ENCODE measurements at regions of chr12 and their contacts with region 1.

Region 1: DNA sequence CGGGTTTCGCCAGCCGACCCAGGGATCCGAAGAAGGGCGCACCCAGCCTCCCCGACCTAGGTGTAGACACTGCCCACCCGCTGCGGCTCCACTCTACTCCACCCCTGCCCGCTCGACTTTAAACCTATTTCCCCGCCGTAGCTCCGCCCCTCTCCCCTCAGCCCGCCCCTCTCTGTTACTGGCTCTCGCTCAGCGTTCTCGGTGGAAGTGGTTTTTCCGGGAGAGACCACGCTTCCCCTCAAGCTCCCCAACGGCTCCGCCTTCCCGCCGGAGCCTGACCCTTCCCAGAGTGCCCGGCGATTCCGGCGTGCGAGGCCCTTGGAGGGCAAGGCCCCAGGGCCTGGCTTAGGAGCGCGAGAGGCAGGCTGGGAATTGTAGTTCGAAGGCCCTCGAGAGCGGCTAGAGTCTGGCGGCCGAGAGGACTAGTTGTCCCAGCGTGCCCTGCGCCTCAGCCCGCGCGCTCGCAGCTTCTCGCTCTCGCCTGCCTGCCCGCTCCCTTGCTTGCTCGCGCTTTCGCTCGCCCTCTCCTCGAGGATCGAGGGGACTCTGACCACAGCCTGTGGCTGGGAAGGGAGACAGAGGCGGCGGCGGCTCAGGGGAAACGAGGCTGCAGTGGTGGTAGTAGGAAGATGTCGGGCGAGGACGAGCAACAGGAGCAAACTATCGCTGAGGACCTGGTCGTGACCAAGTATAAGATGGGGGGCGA is at the start of gene PA2G4:
- DNase-seq: peak; percentile 92
- ATAC-seq: peak; percentile 91
- H3K4me3 Mint-ChIP-seq: peak within 1 kb of the TSS; percentile 98
- H3K27ac Mint-ChIP-seq: peak within 1 kb of the TSS; percentile 93
- H3K4me1 Mint-ChIP-seq: peaks cover 33% of the 10 kb centered on the region
- H3K27me3 Mint-ChIP-seq: no peaks in the 10 kb centered on the region
- CTCF ChIP-seq: no peak
- total RNA-seq, gene PA2G4: 137 and 155 TPM in 2 replicates

Region 2: GRCh38 chr12:55829967-55830600 is 274.2 kb before region 1 on chr12:
- CTCF ChIA-PET with region 1: no interaction called
- POLR2A ChIA-PET with region 1: interaction called, 8 read pairs
- intact Hi-C with region 1: loop called (anchors 2 kb)
- DNase-seq: peak; percentile 32
- ATAC-seq: peak; percentile 13
- H3K4me3 Mint-ChIP-seq: peak overlapping the region; percentile 97
- H3K27ac Mint-ChIP-seq: peak overlapping the region; percentile 91
- H3K4me1 Mint-ChIP-seq: peaks cover 51% of the 10 kb centered on the region
- H3K27me3 Mint-ChIP-seq: no peaks in the 10 kb centered on the region
- CTCF ChIP-seq: no peak

Region 3: DNA sequence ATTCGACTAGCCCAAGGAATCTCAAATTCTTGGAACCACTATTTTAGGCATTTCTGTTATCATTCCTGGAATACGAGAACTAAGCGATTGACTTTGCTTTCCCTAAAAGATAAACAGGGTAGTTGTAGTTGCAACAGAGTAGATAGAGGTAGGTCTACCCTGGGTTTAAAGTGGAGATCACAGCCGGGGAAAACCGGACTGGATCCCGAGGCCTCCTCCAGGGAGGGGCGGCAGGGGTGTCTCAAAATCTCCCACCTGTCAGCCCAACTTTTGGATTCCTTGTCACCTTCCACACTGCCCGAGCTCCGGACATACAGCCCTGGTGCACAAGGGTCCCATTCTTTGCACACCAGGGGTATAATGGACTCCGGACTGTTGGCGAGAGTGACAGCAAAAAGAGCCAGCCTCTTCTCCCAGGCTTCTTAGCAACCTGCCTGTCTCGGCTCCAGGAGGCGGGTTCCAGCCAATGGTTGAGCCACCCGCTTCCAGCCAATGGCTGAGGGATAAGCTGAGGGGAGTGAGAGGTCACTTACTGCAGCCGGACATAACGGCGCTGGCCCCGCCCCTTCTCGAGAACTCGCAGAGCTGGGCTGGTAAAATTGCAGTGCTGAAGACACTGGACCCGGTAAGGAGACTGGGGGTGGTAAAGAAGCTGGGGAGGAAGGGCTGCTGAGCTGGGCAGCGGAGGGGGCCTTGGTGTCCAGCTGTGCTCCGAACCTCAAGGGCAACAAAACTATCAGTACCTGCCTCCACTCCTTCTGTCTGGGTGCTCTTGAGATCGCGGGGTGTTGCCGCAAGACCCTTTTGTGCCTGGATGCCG is 107.3 kb before region 1 on chr12 and contains the start of gene SUOX:
- CTCF ChIA-PET with region 1: interaction called, 3 read pairs
- POLR2A ChIA-PET with region 1: interaction called, 12 read pairs
- intact Hi-C with region 1: loop called (anchors 1 kb)
- DNase-seq: no peak
- ATAC-seq: peak; percentile 75
- H3K4me3 Mint-ChIP-seq: peak within 1 kb of the TSS; percentile 78
- H3K27ac Mint-ChIP-seq: peak within 1 kb of the TSS; percentile 18
- H3K4me1 Mint-ChIP-seq: peaks cover 21% of the 10 kb centered on the region
- H3K27me3 Mint-ChIP-seq: no peaks in the 10 kb centered on the region
- CTCF ChIP-seq: no peak
- total RNA-seq, gene SUOX: 5.4 and 5.6 TPM in 2 replicates

Region 4: GRCh38 chr12:56041552-56042429 is 62.5 kb before region 1 on chr12 and contains the start of gene RPS26:
- CTCF ChIA-PET with region 1: no interaction called
- POLR2A ChIA-PET with region 1: interaction called, 10 read pairs
- intact Hi-C with region 1: loop called (anchors 1 kb)
- DNase-seq: peak; percentile 77
- ATAC-seq: peak; percentile 93
- H3K4me3 Mint-ChIP-seq: peak within 1 kb of the TSS; percentile 99
- H3K27ac Mint-ChIP-seq: peak within 1 kb of the TSS; percentile 98
- H3K4me1 Mint-ChIP-seq: peaks cover 33% of the 10 kb centered on the region
- H3K27me3 Mint-ChIP-seq: no peaks in the 10 kb centered on the region
- CTCF ChIP-seq: no peak
- total RNA-seq, gene RPS26: 23.9 and 28.1 TPM in 2 replicates

Region 5: DNA sequence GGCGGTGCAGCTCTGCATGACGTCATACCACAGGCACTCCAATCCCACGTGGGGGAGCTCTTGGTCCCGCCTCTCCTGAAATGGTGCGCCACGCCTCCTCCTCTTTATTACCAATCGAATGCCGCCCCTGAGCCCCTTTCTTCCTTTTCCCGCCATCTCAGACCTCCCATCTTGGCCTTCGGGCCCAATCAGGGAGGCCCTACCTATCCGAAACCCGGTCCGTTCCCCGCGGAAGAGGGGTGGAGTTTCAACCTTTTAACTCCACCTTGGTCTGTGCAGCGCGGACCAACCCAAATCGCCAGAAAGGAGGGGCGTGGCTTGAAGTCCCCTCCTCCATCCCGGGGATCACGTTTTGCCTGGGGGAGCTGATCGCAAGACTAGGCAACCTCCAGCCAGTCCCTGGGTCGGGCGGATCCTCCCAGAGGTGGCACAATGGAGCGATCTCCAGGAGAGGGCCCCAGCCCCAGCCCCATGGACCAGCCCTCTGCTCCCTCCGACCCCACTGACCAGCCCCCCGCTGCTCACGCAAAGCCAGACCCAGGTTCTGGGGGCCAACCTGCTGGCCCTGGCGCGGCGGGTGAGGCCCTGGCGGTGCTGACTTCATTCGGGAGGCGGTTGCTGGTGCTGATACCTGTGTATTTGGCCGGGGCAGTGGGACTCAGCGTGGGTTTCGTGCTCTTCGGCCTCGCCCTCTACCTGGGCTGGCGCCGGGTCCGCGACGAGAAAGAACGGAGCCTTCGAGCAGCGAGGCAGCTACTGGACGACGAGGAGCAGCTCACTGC is 23.8 kb after region 1 on chr12 and contains the start of gene ESYT1:
- CTCF ChIA-PET with region 1: interaction called, 3 read pairs
- POLR2A ChIA-PET with region 1: interaction called, 23 read pairs
- intact Hi-C with region 1: loop called (anchors 1 kb)
- DNase-seq: peak; percentile 83
- ATAC-seq: peak; percentile 86
- H3K4me3 Mint-ChIP-seq: peak within 1 kb of the TSS; percentile 97
- H3K27ac Mint-ChIP-seq: peak within 1 kb of the TSS; percentile 98
- H3K4me1 Mint-ChIP-seq: peaks cover 69% of the 10 kb centered on the region
- H3K27me3 Mint-ChIP-seq: no peaks in the 10 kb centered on the region
- CTCF ChIP-seq: no peak
- total RNA-seq, gene ESYT1: 120 and 137 TPM in 2 replicates

Region 6: DNA sequence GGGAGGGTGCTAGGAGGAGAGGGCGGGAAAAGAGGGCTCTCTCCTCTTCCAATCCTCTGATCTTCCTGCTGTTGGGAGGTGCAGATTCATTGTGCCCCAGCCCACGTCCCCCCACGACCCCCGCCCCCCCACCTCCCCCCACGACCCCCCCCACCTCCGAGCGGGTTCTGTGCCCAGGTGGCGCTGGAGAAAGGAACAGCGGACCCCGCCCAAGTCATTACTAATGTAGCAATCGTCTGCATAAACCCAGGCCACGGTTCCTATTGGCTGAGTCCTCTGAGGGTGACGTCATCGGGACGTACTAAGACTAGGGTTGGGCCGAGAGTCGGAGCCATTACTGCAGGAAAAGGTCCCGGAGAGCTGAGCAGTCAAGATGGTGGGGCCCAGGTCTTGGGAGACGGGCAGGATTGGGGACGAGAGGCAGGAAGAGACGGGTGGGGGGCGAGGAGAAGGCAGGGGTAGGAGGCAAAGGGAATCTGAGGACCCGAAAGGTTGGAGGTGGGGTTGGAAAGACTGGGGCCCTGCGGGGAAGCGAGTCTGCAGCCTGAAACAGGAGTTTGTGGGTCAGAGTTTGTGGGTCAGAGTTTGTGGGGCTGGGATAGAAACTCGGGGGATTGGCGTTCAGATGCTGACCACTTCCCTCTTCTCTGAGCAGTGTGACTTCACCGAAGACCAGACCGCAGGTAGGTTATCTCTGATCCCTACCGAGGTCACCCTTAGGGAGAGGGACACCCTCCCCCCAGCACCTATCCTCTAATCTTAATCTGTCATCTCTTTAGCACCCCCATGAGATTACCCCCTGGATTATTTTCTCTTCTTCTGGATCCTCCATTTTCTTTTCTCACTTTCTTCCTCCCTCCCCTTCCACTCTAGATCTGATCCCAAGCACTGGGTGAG is 54.0 kb after region 1 on chr12 and contains the start of gene MYL6:
- CTCF ChIA-PET with region 1: no interaction called
- POLR2A ChIA-PET with region 1: interaction called, 12 read pairs
- intact Hi-C with region 1: no loop called
- DNase-seq: peak; percentile 70
- ATAC-seq: peak; percentile 86
- H3K4me3 Mint-ChIP-seq: peak within 1 kb of the TSS; percentile 94
- H3K27ac Mint-ChIP-seq: peak within 1 kb of the TSS; percentile 95
- H3K4me1 Mint-ChIP-seq: peaks cover 48% of the 10 kb centered on the region
- H3K27me3 Mint-ChIP-seq: no peaks in the 10 kb centered on the region
- CTCF ChIP-seq: no peak
- total RNA-seq, gene MYL6: 921 and 1,059 TPM in 2 replicates

Region 7: DNA sequence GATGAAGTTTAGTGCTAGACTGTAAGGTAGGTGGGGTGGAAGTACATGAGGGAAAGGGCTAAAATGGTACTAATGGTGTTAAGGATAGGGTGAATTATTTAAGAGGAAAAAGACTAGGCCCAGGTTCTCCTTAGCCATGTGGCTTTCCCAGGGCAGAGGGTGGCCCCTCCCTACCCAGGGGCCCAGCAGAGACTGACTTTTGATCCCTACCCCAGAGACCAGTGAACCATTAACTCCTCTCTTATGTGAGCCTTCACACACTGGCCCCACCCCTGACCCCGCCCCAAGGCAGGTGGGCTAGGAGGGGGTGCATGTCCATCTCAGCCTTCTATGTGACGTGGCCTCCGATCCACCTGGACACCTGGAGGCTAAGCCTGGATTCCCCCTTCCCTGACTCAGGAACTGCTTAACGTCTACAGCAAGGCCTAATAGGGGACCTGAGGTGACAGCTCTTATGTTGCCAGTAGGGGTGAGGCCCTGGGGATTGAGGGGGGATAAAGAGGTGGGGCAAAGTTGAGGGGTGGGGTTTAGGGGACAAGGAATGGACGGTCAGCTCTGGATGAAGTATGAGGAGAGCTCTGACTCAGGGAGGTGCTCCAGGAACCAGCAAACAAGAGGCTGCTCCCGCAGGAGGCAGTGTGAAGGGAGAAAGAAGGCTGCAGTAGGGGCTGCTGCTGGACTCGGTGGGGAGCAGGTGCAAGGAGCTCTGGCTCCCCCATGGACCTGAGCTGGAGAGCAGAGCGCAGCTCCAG is 126.3 kb after region 1 on chr12:
- CTCF ChIA-PET with region 1: no interaction called
- POLR2A ChIA-PET with region 1: no interaction called
- intact Hi-C with region 1: no loop called
- DNase-seq: no peak
- ATAC-seq: no peak
- H3K4me3 Mint-ChIP-seq: no peak overlapping the region
- H3K27ac Mint-ChIP-seq: no peak overlapping the region
- H3K4me1 Mint-ChIP-seq: peaks cover 2% of the 10 kb centered on the region
- H3K27me3 Mint-ChIP-seq: no peaks in the 10 kb centered on the region
- CTCF ChIP-seq: no peak

Region 8: DNA sequence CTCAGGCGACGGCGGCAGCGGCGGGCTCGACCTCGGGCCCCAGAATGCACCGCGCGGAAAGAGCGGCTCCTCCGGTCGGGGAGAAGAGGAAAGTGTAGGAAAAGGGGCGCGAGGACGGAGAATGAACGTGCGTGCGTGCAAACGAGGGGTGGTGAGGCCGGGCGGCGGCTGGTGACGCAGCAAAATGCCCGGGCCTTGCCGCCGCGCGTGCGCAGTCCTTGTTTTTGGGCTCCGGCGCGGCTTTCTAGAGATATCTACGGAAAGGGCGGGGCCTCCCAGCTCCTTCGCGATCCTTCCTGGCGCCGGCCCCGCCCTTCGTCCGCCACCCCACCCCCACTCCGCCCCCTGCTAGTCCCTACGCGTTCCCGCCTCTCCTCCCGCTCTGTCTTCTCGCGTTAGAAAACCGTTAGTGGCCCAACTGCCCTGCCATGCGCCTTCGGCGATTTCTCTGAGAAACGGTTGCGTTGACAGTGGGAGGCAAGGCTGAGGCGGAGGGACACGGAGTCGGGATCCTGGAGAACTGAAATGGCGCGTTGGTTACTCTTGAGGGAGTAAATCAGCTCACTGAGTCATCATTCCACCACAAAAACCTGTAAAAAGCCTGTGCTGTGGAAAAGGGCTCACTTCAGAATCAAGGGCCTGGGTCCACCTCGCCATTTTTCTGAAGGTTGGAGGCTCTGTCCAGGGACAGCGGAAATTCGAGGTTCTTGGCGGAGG is 584.0 kb after region 1 on chr12 and contains the start of gene PTGES3:
- CTCF ChIA-PET with region 1: no interaction called
- POLR2A ChIA-PET with region 1: no interaction called
- intact Hi-C with region 1: loop called (anchors 5 kb)
- DNase-seq: peak; percentile 97
- ATAC-seq: peak; percentile 75
- H3K4me3 Mint-ChIP-seq: peak within 1 kb of the TSS; percentile 100
- H3K27ac Mint-ChIP-seq: peak within 1 kb of the TSS; percentile 99
- H3K4me1 Mint-ChIP-seq: peaks cover 36% of the 10 kb centered on the region
- H3K27me3 Mint-ChIP-seq: no peaks in the 10 kb centered on the region
- CTCF ChIP-seq: no peak
- total RNA-seq, gene PTGES3: 183 and 185 TPM in 2 replicates

Measured in activated B cell treated with CpG ODN at 0.5 μM for 24 hours (primary cell).